ENCODE measurements at regions of chr15 and their contacts with region 1.

Region 1: DNA sequence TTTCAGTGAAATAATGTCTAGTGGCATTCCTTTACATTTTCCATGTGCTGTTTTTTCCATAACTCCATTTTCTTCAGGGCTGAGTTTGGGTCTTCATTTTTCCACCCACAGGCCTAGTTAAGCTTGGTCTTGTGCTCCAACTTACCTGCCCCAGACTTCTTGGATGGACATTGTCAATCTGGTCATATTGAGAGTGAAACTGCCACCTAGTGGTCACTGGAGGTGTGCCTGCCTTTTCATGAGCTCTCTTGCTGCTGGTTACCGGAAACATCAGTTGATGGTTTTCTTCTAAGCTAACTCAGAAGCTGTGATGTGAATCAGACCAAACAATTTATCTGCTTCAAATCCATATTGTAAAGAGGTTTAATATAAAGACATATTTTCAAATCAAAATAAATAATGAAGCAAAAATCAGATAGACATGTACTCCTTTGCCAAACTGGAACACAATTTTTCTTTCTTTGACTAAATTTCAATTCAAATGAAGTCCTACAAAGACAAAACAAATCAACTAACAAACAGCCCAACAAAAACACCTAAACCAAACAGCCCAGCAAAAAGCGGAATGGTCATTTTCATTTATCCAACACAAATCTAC is 135.1 kb upstream of the RASGRP1 start:
- DNase-seq: no peak
- ATAC-seq: peak; percentile 68
- H3K4me3 ChIP-seq: no peak overlapping the region
- H3K27ac ChIP-seq: no peak overlapping the region
- H3K4me1 ChIP-seq: peaks cover 19% of the 10 kb centered on the region
- H3K27me3 ChIP-seq: no peaks in the 10 kb centered on the region
- CTCF ChIP-seq: peak; percentile 85 to 92 (median 87)
- EP300 ChIP-seq: no peak
- POLR2A ChIP-seq: no peak
- RAD21 ChIP-seq: peak; percentile 79

Region 2: DNA sequence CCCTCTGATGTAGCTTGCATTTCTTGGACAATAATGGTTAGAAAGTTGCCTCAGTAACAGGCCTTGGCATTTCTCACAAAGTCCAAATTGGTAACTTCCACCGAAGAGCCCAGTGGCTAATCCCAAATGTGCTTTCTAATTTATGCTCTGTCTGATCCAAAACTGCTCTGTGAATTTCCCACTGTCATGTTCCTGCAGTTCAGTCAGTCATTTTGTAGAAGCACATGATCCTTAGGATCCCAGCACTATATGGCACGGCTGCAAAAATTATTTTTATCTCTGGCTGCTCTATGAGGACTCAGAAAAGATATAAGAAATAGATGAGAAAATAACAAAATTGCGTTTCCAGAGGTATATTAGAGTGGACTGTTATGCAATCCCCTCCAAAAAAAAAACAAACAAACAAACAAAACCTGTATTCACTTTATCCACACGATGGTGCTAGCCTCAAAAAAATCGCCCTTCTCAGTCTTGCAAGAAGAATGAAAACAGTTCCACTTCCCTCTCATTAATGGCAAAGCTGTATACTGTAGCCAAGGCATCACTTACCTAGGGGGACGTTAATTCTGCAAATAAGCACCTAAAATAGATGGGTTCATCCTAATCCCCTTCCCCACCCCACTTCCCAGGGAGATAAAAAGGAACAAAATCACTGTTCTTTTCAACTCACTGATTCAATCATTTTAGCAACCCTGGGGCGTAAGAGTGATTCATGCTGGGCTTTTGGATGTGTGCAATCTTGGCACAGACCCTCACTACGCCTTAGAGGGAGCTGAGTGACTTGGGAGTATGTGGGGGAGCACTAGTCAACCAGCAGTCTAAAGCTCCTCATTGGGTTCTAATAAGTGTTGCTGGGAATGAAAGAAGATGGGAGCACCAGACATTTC is 704.0 kb before region 1 on chr15:
- CTCF ChIA-PET with region 1: interaction called, 12 read pairs
- POLR2A ChIA-PET with region 1: no interaction called
- RAD21 ChIA-PET with region 1: interaction called, 4 read pairs
- SMC1A ChIA-PET with region 1: interaction called, 5 read pairs
- in situ Hi-C with region 1: loop called (anchors 10 kb)
- intact Hi-C with region 1: loop called (anchors 5 kb)
- DNase-seq: peak; percentile 26
- ATAC-seq: peak; percentile 93
- H3K4me3 ChIP-seq: no peak overlapping the region
- H3K27ac ChIP-seq: no peak overlapping the region
- H3K4me1 ChIP-seq: no peaks in the 10 kb centered on the region
- H3K27me3 ChIP-seq: no peaks in the 10 kb centered on the region; a peak in 1 of 4 replicates
- CTCF ChIP-seq: peak; percentile 49 to 78 (median 54); a peak in 5 of 6 replicates
- EP300 ChIP-seq: no peak
- POLR2A ChIP-seq: no peak
- RAD21 ChIP-seq: peak; percentile 91

Region 3: DNA sequence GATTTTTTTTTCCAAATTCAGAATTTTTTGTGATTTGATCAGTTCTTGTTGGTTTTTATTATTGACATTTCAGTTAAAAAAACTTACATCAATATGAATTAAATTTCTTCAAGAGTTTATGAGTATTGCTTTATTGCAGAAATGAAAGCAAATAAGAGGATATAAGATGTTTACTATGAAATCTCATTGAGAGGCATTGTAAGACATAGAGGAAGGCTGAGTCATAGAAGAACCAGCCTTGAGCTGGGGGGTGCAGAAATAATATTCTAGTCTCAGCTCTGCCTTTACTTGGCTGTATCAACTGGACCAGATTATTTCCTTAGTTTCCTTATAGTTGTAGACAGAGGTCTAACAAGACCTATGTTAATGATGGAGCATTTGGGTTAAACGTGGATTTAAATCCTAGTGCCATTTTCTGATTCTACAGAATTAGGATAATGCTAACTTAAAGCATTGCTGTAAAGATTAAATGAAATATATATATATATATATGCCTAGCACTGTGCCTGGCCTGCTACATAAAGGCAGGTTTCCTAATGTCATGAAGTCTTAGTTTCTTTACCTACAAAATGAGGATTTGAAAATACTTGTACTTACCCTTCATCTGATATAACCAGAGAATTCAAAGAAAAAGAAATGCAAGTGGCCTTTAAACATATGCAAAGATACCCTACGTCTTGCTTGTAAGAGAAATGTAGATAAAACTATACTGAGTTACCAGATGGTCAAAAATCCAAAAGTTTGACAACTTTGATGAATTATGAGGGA is 238.5 kb before region 1 on chr15:
- CTCF ChIA-PET with region 1: interaction called, 31 read pairs
- POLR2A ChIA-PET with region 1: no interaction called
- RAD21 ChIA-PET with region 1: interaction called, 10 read pairs
- SMC1A ChIA-PET with region 1: interaction called, 12 read pairs
- in situ Hi-C with region 1: no loop called
- intact Hi-C with region 1: no loop called
- DNase-seq: no peak
- ATAC-seq: peak; percentile 92
- H3K4me3 ChIP-seq: 0 out of 2 replicates have a peak overlapping the region, but pooled peaks have one; percentile 13
- H3K27ac ChIP-seq: peak overlapping the region; percentile 40
- H3K4me1 ChIP-seq: peaks cover 15% of the 10 kb centered on the region; the same call in 1 of the 2 replicates
- H3K27me3 ChIP-seq: no peaks in the 10 kb centered on the region
- CTCF ChIP-seq: no peak
- EP300 ChIP-seq: 0 out of 4 replicates have a peak, but pooled peaks of 1 of the 2 experiments have one; percentile 36
- POLR2A ChIP-seq: no peak
- RAD21 ChIP-seq: no peak

Region 4: DNA sequence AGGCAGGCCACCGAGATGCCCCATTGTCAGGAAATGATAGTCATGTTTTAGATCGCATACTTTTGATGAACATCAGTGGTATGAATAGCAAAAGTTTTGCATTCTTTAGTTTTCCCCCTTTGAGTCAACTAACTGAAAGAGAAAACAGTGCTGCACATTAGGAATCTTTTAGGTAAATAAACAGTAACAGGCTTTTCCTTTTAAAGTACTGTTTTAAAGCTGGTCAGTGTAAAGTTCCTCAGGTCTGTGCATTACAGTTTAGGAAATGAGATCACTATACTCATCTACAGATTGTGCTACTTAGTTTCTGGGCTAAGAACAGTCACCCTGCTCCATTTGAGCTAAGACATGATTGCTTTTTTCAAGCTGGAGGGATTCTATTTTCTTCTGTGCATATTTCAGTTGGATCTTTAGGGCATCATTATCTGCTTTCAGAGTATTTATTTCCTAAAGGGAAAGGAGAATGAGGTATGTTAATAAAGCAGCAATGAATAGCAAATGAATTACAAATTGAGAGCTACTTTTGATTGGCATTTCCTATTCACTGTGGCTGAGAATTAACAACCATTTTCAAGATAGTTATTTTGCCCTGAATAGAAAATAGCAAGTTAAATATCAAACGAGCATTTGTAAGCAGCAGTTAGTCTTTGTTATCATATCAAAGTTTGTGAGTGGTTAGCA is 209.3 kb before region 1 on chr15:
- CTCF ChIA-PET with region 1: interaction called, 13 read pairs
- POLR2A ChIA-PET with region 1: no interaction called
- RAD21 ChIA-PET with region 1: interaction called, 6 read pairs
- SMC1A ChIA-PET with region 1: interaction called, 22 read pairs
- in situ Hi-C with region 1: no loop called
- intact Hi-C with region 1: no loop called
- DNase-seq: no peak
- ATAC-seq: no peak
- H3K4me3 ChIP-seq: no peak overlapping the region
- H3K27ac ChIP-seq: no peak overlapping the region
- H3K4me1 ChIP-seq: no peaks in the 10 kb centered on the region
- H3K27me3 ChIP-seq: no peaks in the 10 kb centered on the region
- CTCF ChIP-seq: no peak
- EP300 ChIP-seq: no peak
- POLR2A ChIP-seq: no peak
- RAD21 ChIP-seq: no peak

Region 5: DNA sequence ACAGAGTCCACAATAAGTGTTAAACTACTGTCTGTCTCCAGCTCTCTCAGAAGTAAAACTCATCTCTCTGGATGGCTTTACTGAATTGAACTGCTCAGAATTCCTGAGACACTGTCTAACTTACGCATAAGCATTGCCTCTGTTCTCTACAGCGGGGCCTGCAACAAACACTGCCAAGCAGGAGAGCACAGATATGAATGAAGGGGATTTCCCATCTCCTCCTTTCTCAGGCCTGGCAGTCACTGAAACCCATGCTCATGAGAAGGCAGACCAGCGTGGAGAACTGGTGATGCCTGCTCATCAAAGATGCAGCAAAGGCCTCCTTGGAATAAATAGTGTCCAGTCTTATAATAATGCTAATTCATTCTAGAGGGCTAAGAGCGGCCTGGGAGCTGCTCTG is 145.4 kb before region 1 on chr15:
- CTCF ChIA-PET with region 1: interaction called, 276 read pairs
- POLR2A ChIA-PET with region 1: interaction called, 3 read pairs
- RAD21 ChIA-PET with region 1: interaction called, 4 read pairs
- SMC1A ChIA-PET with region 1: interaction called, 293 read pairs
- in situ Hi-C with region 1: no loop called
- intact Hi-C with region 1: no loop called
- DNase-seq: no peak
- ATAC-seq: peak; percentile 80
- H3K4me3 ChIP-seq: no peak overlapping the region
- H3K27ac ChIP-seq: peak overlapping the region; percentile 59; the same call in 1 of the 2 replicates
- H3K4me1 ChIP-seq: peaks cover 45% of the 10 kb centered on the region
- H3K27me3 ChIP-seq: no peaks in the 10 kb centered on the region
- CTCF ChIP-seq: no peak
- EP300 ChIP-seq: no peak
- POLR2A ChIP-seq: no peak
- RAD21 ChIP-seq: no peak

Region 6: DNA sequence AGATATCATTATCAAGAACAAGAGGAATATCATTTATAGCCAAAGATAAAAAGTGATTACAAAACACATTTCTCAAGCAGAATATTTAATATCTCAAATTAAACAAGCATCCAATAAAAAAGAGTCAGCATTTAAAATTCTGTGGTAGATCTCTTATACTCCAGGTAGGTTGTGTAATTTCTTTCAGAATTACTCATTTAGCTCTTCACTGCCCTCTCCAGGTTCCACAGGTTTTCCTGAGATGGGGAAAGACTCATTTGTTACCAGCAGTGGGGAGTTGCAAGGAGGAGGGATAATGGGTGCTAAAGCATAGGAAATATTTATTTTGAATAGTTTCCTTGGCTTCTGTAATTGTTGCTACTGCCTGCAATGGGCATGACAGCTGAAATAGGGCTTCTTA is 52.0 kb before region 1 on chr15:
- CTCF ChIA-PET with region 1: interaction called, 5 read pairs
- POLR2A ChIA-PET with region 1: no interaction called
- RAD21 ChIA-PET with region 1: interaction called, 36 read pairs
- SMC1A ChIA-PET with region 1: interaction called, 7 read pairs
- in situ Hi-C with region 1: no loop called
- intact Hi-C with region 1: no loop called
- DNase-seq: no peak
- ATAC-seq: no peak
- H3K4me3 ChIP-seq: no peak overlapping the region
- H3K27ac ChIP-seq: no peak overlapping the region
- H3K4me1 ChIP-seq: peaks cover 27% of the 10 kb centered on the region
- H3K27me3 ChIP-seq: no peaks in the 10 kb centered on the region
- CTCF ChIP-seq: peak in 2 of 3 experiments; percentile 5 to 17; a peak in 1 of 6 replicates
- EP300 ChIP-seq: no peak
- POLR2A ChIP-seq: no peak
- RAD21 ChIP-seq: peak; percentile 23; the same call in 1 of the 2 replicates

Region 7: GRCh38 chr15:38853608-38854007 is 153.9 kb after region 1 on chr15:
- CTCF ChIA-PET with region 1: interaction called, 4 read pairs
- POLR2A ChIA-PET with region 1: no interaction called
- RAD21 ChIA-PET with region 1: interaction called, 3 read pairs
- SMC1A ChIA-PET with region 1: no interaction called
- in situ Hi-C with region 1: no loop called
- intact Hi-C with region 1: loop called (anchors 10 kb)
- DNase-seq: no peak
- ATAC-seq: peak; percentile 80
- H3K4me3 ChIP-seq: no peak overlapping the region
- H3K27ac ChIP-seq: no peak overlapping the region
- H3K4me1 ChIP-seq: no peaks in the 10 kb centered on the region
- H3K27me3 ChIP-seq: no peaks in the 10 kb centered on the region
- CTCF ChIP-seq: peak; percentile 41 to 53 (median 49)
- EP300 ChIP-seq: no peak
- POLR2A ChIP-seq: no peak
- RAD21 ChIP-seq: peak; percentile 49

Measured in GM12878 (cell line).